HepG2 (cell line): ENCODE measurements at regions of chr22 and their contacts with region 1.

Region 1: DNA sequence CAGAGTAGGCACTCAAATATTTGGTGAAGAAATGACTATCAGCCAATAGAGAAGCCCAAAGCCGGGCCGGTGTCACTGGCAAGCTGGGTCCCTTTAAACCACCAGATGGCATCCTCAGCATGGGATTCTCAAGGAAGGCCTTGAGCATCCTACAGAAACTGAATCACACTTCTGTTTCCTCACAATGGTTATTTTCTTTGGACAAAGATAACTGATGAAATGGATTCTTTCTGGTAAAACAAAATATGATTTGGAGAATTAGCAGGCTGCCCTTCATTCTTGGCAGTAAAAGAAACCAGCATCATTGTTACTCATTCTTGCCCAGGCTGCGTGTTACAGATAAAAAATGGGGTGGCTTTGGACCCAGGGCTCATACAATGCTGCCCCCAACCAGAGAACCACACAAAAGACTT is 30.3 kb upstream of the ASPHD2 start:
- DNase-seq: no peak
- ATAC-seq: peak; percentile 48; the same call in 2 of the 3 replicates
- H3K4me3 ChIP-seq: no peak overlapping the region
- H3K27ac ChIP-seq: no peak overlapping the region
- H3K4me1 ChIP-seq: no peaks in the 10 kb centered on the region
- H3K27me3 ChIP-seq: peaks cover 0 to 12% of the 10 kb centered on the region in 2 experiments; a peak in 3 of 5 replicates
- CTCF ChIP-seq: peak; percentile 58
- EP300 ChIP-seq: no peak
- POLR2A ChIP-seq: no peak
- RAD21 ChIP-seq: no peak

Region 2: GRCh38 chr22:26360169-26360885 is 38.4 kb before region 1 on chr22:
- CTCF ChIA-PET with region 1: no interaction called
- POLR2A ChIA-PET with region 1: no interaction called
- in situ Hi-C with region 1: no loop called
- intact Hi-C with region 1: no loop called
- DNase-seq: peak; percentile 78
- ATAC-seq: peak; percentile 83
- H3K4me3 ChIP-seq: peak overlapping the region in 1 of 3 experiments; percentile 24; a peak in 1 of 6 replicates
- H3K27ac ChIP-seq: no peak overlapping the region
- H3K4me1 ChIP-seq: peaks cover 9% of the 10 kb centered on the region
- H3K27me3 ChIP-seq: peaks cover 0 to 11% of the 10 kb centered on the region in 2 experiments; a peak in 2 of 5 replicates
- CTCF ChIP-seq: peak; percentile 71
- EP300 ChIP-seq: no peak
- POLR2A ChIP-seq: no peak
- RAD21 ChIP-seq: no peak

Region 3: DNA sequence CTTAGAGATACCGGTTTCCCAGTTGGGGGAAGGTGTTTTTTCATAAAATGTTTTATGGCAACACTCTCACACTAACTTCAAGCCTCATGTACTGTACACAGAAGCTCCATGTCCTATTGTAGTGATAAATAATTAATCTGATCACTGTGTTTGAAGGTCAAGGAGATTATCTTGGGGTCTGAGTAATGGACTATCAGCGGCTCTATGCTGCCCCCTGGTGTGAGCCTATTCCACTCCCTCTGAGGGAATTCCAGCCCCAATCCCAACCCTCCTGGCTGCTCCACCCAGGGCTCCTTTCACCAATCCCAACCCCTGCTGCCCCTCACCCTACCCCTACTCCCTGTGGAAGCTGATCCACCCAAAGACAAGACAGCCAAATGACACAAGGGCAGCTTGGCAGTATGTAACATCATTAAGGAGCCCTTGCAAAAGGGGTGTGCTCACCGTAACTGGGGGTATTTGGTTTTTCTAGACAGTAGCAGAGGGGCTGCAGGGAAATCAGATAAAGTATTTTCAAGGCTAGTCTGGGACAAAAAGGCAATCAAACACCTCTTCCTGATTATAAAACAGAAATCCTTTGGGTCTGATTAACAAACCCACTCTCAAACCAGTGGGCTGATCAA is 62.6 kb after region 1 on chr22:
- CTCF ChIA-PET with region 1: interaction called, 8 read pairs
- POLR2A ChIA-PET with region 1: no interaction called
- in situ Hi-C with region 1: no loop called
- intact Hi-C with region 1: loop called (anchors 1 kb)
- DNase-seq: peak; percentile 24
- ATAC-seq: peak; percentile 89
- H3K4me3 ChIP-seq: no peak overlapping the region
- H3K27ac ChIP-seq: no peak overlapping the region
- H3K4me1 ChIP-seq: peaks cover 16% of the 10 kb centered on the region
- H3K27me3 ChIP-seq: no peaks in the 10 kb centered on the region
- CTCF ChIP-seq: peak; percentile 73
- EP300 ChIP-seq: no peak
- POLR2A ChIP-seq: no peak
- RAD21 ChIP-seq: 0 out of 2 replicates have a peak, but pooled peaks have one; percentile 15